Naive thymus-derived CD4-positive, alpha-beta T cell (primary cell): ENCODE measurements at regions of chr3 and their contacts with region 1.

Region 1: GRCh38 chr3:39327746-39328349 is 1.7 kb upstream of the CCR8 start:
- DNase-seq: peak in 1 of 9 donors; percentile 30
- ATAC-seq: peak; percentile 78
- H3K4me3 ChIP-seq: no peak overlapping the region
- H3K4me3 Mint-ChIP-seq: peak overlapping the region in 1 of 10 donors; percentile 74
- H3K27ac ChIP-seq: no peak overlapping the region
- H3K27ac Mint-ChIP-seq: peak overlapping the region in 1 of 9 donors; percentile 76
- H3K4me1 ChIP-seq: peaks cover 0 to 2% of the 10 kb centered on the region in 2 donors
- H3K4me1 Mint-ChIP-seq: peaks cover 7 to 72% (median 16%) of the 10 kb centered on the region in 7 donors
- H3K27me3 ChIP-seq: no peaks in the 10 kb centered on the region
- H3K27me3 Mint-ChIP-seq: no peaks in the 10 kb centered on the region

Region 2: GRCh38 chr3:39346785-39347585 is 19.1 kb after region 1 on chr3:
- CTCF ChIA-PET with region 1: interaction called, 3 read pairs
- POLR2A ChIA-PET with region 1: no interaction called
- intact Hi-C with region 1: loop called in 1 of 2 experiments (anchors 2 kb)
- DNase-seq: peak in 1 of 9 donors; percentile 11
- ATAC-seq: no peak
- H3K4me3 ChIP-seq: no peak overlapping the region
- H3K4me3 Mint-ChIP-seq: peak overlapping the region; percentile 0 to 71 (median 36)
- H3K27ac ChIP-seq: no peak overlapping the region
- H3K27ac Mint-ChIP-seq: peak overlapping the region; percentile 20 to 80 (median 71)
- H3K4me1 ChIP-seq: peaks cover 0 to 19% of the 10 kb centered on the region in 2 donors
- H3K4me1 Mint-ChIP-seq: peaks cover 8 to 63% (median 52%) of the 10 kb centered on the region in 7 donors
- H3K27me3 ChIP-seq: no peaks in the 10 kb centered on the region
- H3K27me3 Mint-ChIP-seq: no peaks in the 10 kb centered on the region

Region 3: GRCh38 chr3:39361252-39361927 is 33.5 kb after region 1 on chr3:
- CTCF ChIA-PET with region 1: no interaction called
- POLR2A ChIA-PET with region 1: no interaction called
- intact Hi-C with region 1: loop called in 1 of 2 experiments (anchors 5 kb)
- DNase-seq: peak in 4 of 9 donors; percentile 25 to 70 (median 34)
- ATAC-seq: peak; percentile 93
- H3K4me3 ChIP-seq: no peak overlapping the region
- H3K4me3 Mint-ChIP-seq: peak overlapping the region; percentile 25 to 82 (median 68)
- H3K27ac ChIP-seq: no peak overlapping the region
- H3K27ac Mint-ChIP-seq: peak overlapping the region; percentile 13 to 89 (median 43)
- H3K4me1 ChIP-seq: peaks cover 18 to 28% of the 10 kb centered on the region in 2 donors
- H3K4me1 Mint-ChIP-seq: peaks cover 24 to 61% (median 49%) of the 10 kb centered on the region in 7 donors
- H3K27me3 ChIP-seq: no peaks in the 10 kb centered on the region
- H3K27me3 Mint-ChIP-seq: peaks cover 0 to 10% (median 0%) of the 10 kb centered on the region in 5 donors